ENCODE measurements at regions of chr6 and their contacts with region 1.

Region 1: DNA sequence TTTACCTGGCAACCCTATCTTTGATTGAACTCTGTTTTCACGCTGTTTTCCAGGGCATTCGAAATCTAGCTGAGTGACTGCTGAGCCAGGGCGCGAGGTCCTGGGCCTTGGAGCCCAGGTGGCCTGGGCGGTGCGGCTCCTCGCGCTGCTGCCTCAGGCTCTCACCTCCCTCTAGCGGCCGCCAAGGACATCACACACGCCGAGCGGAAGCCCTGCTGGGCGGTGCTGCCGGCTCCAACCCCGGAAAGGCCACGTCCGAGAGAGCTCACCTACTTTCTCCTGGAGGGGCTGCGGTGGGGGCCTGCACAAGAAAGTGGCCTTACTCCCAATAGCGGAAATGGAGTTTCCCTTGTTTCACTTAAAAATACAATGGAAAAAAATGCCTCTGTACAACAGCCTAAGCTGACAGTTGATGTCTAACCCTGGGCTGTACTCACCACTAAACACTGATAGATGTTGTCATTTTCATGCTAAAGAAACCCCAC is 77.7 kb downstream of the ELOVL4 start:
- DNase-seq: peak; percentile 67
- H3K4me3 ChIP-seq: no peak overlapping the region
- H3K27ac ChIP-seq: peak overlapping the region; percentile 3 to 54
- H3K4me1 ChIP-seq: no peaks in the 10 kb centered on the region
- H3K27me3 ChIP-seq: no peaks in the 10 kb centered on the region
- CTCF ChIP-seq: peak; percentile 76 to 88 (median 82)
- POLR2A ChIP-seq: no peak

Region 2: GRCh38 chr6:79777713-79778579 is 91.7 kb before region 1 on chr6:
- intact Hi-C with region 1: loop called (anchors 5 kb)
- DNase-seq: peak; percentile 49
- H3K4me3 ChIP-seq: peak overlapping the region in 1 of 2 donors; percentile 8
- H3K27ac ChIP-seq: no peak overlapping the region
- H3K4me1 ChIP-seq: no peaks in the 10 kb centered on the region
- H3K27me3 ChIP-seq: no peaks in the 10 kb centered on the region
- CTCF ChIP-seq: peak; percentile 85 to 95 (median 88)
- POLR2A ChIP-seq: no peak

Region 3: DNA sequence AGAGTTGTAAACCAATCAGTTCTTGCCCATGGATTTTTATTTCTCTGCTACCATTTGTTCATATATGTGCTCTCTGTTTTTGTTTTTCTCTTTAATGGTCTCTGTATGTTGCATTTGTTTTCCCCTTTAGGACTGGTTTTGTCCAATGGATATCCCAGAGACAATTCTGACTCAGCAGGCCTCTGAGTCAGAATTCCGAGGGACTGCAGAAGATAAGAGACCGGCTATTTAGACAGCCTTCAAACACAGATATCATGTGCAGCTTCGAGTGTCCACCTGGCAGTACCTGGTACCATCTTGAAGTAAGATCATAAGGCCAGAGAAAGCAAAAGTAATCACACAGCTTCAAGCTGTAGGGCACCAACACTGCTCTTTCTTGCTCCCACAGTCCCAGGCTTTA is 47.8 kb before region 1 on chr6:
- intact Hi-C with region 1: no loop called
- DNase-seq: no peak
- H3K4me3 ChIP-seq: no peak overlapping the region
- H3K27ac ChIP-seq: no peak overlapping the region
- H3K4me1 ChIP-seq: no peaks in the 10 kb centered on the region
- H3K27me3 ChIP-seq: no peaks in the 10 kb centered on the region
- CTCF ChIP-seq: no peak
- POLR2A ChIP-seq: no peak

Measured in prostate gland (tissue), 2 donors.